ENCODE measurements at regions of chr9 and their contacts with region 1.

Region 1: DNA sequence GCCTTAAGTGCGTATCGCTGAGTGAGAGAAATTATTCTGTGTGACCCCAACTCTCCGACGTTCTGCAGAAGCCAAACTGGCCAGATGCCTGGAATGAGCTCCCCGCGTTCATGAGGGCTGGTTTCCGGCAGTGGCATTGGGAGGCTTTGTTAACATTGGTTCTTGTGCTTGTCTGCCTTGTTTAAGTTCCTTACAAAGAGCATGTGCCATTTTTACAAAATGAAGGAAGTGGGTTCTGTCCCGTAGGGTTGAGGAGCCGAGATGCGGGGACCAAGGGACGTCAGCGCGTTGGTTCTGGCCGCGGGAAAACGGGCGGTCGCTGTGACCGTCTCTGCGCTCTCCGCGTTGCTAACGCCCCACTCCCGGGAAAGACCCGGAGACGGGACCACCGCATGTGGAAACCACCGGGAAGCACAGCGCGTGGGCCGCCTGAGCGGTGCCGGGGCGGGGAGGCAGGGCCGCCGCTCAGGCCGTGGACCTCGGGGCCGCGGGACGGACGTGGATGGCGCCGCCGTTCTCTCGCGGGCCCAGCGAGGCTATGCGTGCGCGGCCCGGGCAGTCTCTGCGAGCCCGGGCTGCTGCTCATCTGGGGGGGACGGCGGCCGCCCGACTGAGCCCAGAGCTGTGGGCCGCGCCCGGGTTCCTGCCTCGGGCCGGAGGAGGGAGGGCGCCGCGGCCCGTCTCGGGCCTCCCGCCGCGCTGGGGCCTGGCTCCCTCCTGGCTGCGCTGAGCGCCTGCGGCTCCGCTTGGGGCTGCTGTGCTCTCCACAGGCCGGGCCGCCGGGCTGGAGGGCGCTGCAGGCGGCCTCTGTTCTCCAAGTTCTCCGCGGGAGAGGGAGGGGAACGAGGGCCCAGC is 13.4 kb downstream of the RABL6 start:
- DNase-seq: peak; percentile 47
- ATAC-seq: peak; percentile 73
- H3K4me3 Mint-ChIP-seq: peak overlapping the region; percentile 75
- H3K27ac Mint-ChIP-seq: peak overlapping the region; percentile 14; the same call in 1 of the 2 replicates
- H3K4me1 Mint-ChIP-seq: peaks cover 14% of the 10 kb centered on the region
- H3K27me3 Mint-ChIP-seq: no peaks in the 10 kb centered on the region
- CTCF ChIP-seq: no peak

Region 2: DNA sequence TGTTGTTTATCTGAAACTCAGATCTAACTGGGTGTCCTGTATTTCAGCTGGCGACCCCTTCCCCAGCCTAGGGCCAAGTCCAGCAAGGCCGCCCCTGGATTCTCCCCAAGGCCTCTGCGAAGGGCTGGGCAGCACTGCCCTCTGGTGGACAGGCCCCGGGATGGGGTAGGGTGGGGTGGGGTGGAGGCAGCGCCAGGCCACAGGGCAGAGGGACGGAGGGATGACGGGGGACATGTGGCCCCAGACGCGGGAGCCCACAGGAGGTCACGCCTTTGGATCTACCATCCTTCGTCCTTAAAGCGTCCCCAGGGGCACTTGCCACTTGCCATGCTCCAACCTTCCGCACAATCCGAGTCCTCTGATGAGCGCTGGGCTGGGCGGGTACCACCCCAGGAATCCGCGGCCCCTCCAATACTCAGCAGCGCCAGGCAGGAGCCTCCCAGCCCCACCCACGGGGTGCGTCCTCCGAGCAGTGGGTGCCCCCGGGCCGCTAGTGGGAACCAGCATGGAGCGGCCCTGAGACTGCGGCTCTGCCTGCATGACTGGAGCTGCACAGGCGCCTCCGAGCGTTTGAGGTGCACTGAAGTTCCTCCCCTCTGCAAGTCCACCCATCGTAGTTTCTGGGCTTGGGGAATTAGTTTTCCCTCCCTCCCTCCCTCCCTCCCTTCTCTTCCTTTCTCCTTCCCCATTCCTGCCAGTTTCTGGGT is 126.8 kb before region 1 on chr9:
- CTCF ChIA-PET with region 1: no interaction called
- POLR2A ChIA-PET with region 1: no interaction called
- DNase-seq: peak; percentile 85
- ATAC-seq: peak; percentile 83
- H3K4me3 Mint-ChIP-seq: no peak overlapping the region
- H3K27ac Mint-ChIP-seq: no peak overlapping the region
- H3K4me1 Mint-ChIP-seq: peaks cover 10% of the 10 kb centered on the region
- H3K27me3 Mint-ChIP-seq: no peaks in the 10 kb centered on the region
- CTCF ChIP-seq: peak; percentile 41

Region 3: DNA sequence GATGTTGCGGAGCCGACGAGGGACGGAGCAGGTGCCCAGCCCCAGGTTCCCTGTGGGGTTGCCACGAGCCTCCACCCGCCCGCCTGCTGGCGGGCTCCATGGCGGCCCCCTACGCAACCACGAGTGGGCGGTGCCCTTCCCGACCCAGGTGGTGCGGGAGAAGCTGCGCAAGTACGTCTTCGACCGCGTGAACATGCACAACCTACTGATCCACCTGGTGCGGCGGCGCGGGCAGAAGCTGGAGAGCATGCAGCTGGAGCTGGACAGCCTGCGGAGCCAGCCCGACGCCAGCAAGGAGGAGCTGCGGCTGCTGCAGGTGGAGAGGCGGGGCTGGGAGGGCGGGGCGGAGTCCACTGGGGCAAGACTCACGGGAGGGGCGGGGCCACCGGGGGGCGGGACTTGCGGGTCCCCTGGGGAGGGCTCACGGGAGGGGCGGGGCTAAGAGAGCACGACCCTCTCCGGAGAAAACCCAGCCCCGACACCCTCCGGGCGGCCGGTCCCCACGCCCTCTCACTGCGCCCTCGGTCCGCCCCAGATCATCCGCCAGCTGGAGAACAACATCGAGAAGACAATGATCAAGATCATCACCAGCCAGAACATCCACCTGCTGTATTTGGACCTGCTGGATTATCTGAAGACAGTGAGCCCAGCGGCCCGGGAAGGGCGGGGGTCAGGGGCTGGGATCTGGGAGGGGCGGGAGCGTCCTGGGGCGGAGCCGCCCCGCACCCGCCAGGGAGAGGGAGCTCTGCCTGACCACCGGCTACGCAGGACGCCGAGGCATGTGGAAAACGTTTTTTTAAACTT is 21.1 kb before region 1 on chr9:
- CTCF ChIA-PET with region 1: interaction called, 10 read pairs
- POLR2A ChIA-PET with region 1: interaction called, 5 read pairs
- DNase-seq: peak; percentile 92
- ATAC-seq: peak; percentile 54
- H3K4me3 Mint-ChIP-seq: peak overlapping the region; percentile 90
- H3K27ac Mint-ChIP-seq: peak overlapping the region; percentile 97
- H3K4me1 Mint-ChIP-seq: peaks cover 17% of the 10 kb centered on the region
- H3K27me3 Mint-ChIP-seq: peaks cover 58% of the 10 kb centered on the region
- CTCF ChIP-seq: no peak

Region 4: GRCh38 chr9:136807281-136808074 is 13.7 kb before region 1 on chr9 and contains the start of gene RABL6:
- CTCF ChIA-PET with region 1: interaction called, 23 read pairs
- POLR2A ChIA-PET with region 1: interaction called, 5 read pairs
- DNase-seq: peak; percentile 65
- ATAC-seq: peak; percentile 74
- H3K4me3 Mint-ChIP-seq: peak within 1 kb of the TSS; percentile 86
- H3K27ac Mint-ChIP-seq: peak within 1 kb of the TSS; percentile 53; the same call in 1 of the 2 replicates
- H3K4me1 Mint-ChIP-seq: peaks cover 21% of the 10 kb centered on the region
- H3K27me3 Mint-ChIP-seq: peaks cover 20% of the 10 kb centered on the region
- CTCF ChIP-seq: no peak
- total RNA-seq, gene RABL6: 134 to 171 TPM (median 139 TPM) in 3 replicates

Region 5: GRCh38 chr9:136840140-136840687 is 19.0 kb after region 1 on chr9:
- CTCF ChIA-PET with region 1: interaction called, 64 read pairs
- POLR2A ChIA-PET with region 1: interaction called, 4 read pairs
- DNase-seq: no peak
- ATAC-seq: no peak
- H3K4me3 Mint-ChIP-seq: no peak overlapping the region
- H3K27ac Mint-ChIP-seq: no peak overlapping the region
- H3K4me1 Mint-ChIP-seq: peaks cover 23% of the 10 kb centered on the region
- H3K27me3 Mint-ChIP-seq: no peaks in the 10 kb centered on the region
- CTCF ChIP-seq: no peak